ENCODE measurements at regions of chr19 and their contacts with region 1.

Region 1: GRCh38 chr19:40777937-40778705 is at the start of gene RAB4B:
- DNase-seq: peak; percentile 100
- H3K4me3 Mint-ChIP-seq: peak within 1 kb of the TSS; percentile 91
- H3K27ac Mint-ChIP-seq: peak within 1 kb of the TSS; percentile 89
- H3K4me1 Mint-ChIP-seq: peaks cover 51% of the 10 kb centered on the region
- H3K27me3 Mint-ChIP-seq: peaks cover 2% of the 10 kb centered on the region
- total RNA-seq, gene RAB4B: 40.6 and 45.5 TPM in 2 replicates

Region 2: DNA sequence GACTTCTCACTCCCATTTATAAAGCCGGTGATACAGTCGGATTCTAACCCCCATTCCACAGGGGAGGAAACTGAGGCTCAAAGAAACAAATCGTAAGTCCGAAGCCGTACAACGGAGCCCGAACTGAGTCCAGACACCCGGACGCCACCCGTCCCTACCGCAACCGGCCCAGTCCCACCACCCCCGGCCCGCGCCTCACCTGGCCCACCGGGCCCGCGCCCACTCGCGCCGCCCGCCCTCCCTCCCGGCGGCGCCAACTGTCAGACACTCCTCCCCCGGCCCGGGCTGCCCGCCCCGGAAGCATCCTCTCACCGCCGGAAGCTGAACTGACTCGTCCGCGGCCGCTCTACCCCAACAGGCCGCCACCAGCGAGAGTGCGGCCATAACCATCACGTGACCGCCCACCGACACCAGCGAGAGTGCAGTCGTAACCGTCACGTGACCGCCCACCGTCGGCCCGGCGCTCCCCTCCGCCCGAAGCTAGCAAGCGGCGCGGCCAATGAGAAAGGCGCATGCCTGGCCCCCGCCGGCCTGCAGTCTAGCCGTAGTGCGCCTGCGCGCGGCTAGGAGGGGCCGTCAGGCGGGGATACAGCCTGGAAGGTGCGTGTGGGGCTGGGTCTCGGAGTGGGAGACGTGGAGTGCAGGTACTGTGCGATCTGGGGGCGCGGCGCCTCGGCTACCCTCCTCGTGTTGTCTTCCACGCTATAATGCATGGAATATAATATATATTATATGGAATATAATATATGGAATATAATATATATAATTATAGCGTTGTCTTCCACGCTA is 429.8 kb before region 1 on chr19 and contains the starts of genes C19orf47 and PLD3:
- intact Hi-C with region 1: no loop called
- DNase-seq: peak; percentile 99
- H3K4me3 Mint-ChIP-seq: peak within 1 kb of the TSS; percentile 97
- H3K27ac Mint-ChIP-seq: peak within 1 kb of the TSS; percentile 95
- H3K4me1 Mint-ChIP-seq: peaks cover 21% of the 10 kb centered on the region
- H3K27me3 Mint-ChIP-seq: peaks cover 2% of the 10 kb centered on the region
- total RNA-seq, gene C19orf47: 26.4 and 28.1 TPM in 2 replicates
- total RNA-seq, gene PLD3: 45.0 and 45.3 TPM in 2 replicates

Region 3: GRCh38 chr19:40425450-40426287 is 352.5 kb before region 1 on chr19 and contains the start of gene SERTAD1:
- intact Hi-C with region 1: loop called (anchors 1 kb)
- DNase-seq: peak; percentile 100
- H3K4me3 Mint-ChIP-seq: peak within 1 kb of the TSS; percentile 93
- H3K27ac Mint-ChIP-seq: peak within 1 kb of the TSS; percentile 99
- H3K4me1 Mint-ChIP-seq: peaks cover 7% of the 10 kb centered on the region
- H3K27me3 Mint-ChIP-seq: peaks cover 2% of the 10 kb centered on the region
- total RNA-seq, gene SERTAD1: 18.3 and 19.4 TPM in 2 replicates

Region 4: GRCh38 chr19:40614622-40615411 is 163.3 kb before region 1 on chr19:
- intact Hi-C with region 1: loop called (anchors 1 kb)
- DNase-seq: peak; percentile 75
- H3K4me3 Mint-ChIP-seq: peak overlapping the region; percentile 97
- H3K27ac Mint-ChIP-seq: peak overlapping the region; percentile 100
- H3K4me1 Mint-ChIP-seq: peaks cover 41% of the 10 kb centered on the region
- H3K27me3 Mint-ChIP-seq: no peaks in the 10 kb centered on the region

Region 5: GRCh38 chr19:40716655-40717324 is 61.3 kb before region 1 on chr19 and contains the starts of genes COQ8B and ITPKC:
- intact Hi-C with region 1: loop called (anchors 1 kb)
- DNase-seq: peak; percentile 100
- H3K4me3 Mint-ChIP-seq: peak within 1 kb of the TSS; percentile 97
- H3K27ac Mint-ChIP-seq: peak within 1 kb of the TSS; percentile 95
- H3K4me1 Mint-ChIP-seq: peaks cover 44% of the 10 kb centered on the region
- H3K27me3 Mint-ChIP-seq: no peaks in the 10 kb centered on the region
- total RNA-seq, gene COQ8B: 38.4 and 41.6 TPM in 2 replicates
- total RNA-seq, gene ITPKC: 8.7 and 9.9 TPM in 2 replicates

Region 6: DNA sequence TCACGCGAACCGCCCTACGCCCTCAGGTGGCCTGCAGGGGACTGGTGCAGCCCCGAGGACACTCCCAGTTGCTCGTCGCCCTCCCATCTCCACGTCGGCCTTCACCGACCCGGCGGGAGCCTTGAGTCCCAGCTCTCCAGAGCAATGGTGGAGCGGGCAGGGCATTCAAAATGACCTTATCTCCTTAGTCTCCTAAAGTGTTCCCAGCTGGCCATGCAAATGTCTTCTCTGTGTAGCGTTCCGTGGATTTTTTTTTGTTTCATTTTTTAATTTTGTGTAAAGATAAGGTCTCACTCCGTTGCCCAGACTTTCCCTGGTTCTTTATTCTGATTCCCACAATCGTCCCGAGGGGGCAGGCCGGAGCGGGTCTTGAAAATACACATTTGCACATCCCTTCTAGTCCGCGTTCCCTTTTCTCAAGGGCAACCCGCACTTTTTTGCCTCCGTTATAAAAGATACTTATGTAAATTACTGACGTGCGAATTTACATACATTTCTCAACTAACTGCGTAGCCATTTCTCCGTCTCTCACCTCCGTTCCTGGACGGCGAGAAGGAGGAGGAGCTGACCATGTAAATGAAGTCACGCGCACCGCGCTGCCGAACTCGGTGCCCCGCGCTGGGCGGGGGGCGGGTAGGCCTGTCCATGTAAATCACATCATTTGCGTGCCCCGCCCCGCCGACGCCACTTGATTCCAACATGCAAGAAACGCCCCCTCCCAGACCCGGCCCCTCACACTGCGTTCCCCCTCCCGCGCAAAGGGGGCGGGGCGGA is 20.3 kb after region 1 on chr19:
- intact Hi-C with region 1: loop called (anchors 1 kb)
- DNase-seq: peak; percentile 100
- H3K4me3 Mint-ChIP-seq: peak overlapping the region; percentile 87
- H3K27ac Mint-ChIP-seq: peak overlapping the region; percentile 92
- H3K4me1 Mint-ChIP-seq: peaks cover 56% of the 10 kb centered on the region
- H3K27me3 Mint-ChIP-seq: no peaks in the 10 kb centered on the region

Region 7: GRCh38 chr19:41363753-41364523 is 585.8 kb after region 1 on chr19 and contains the start of gene B9D2:
- intact Hi-C with region 1: loop called (anchors 1 kb)
- DNase-seq: peak; percentile 97
- H3K4me3 Mint-ChIP-seq: peak within 1 kb of the TSS; percentile 88
- H3K27ac Mint-ChIP-seq: peak within 1 kb of the TSS; percentile 98
- H3K4me1 Mint-ChIP-seq: peaks cover 30% of the 10 kb centered on the region
- H3K27me3 Mint-ChIP-seq: no peaks in the 10 kb centered on the region
- total RNA-seq, gene B9D2: 4.4 and 4.5 TPM in 2 replicates